PC-9 (cell line): ENCODE measurements at regions of chr3 and their contacts with region 1.

Region 1: DNA sequence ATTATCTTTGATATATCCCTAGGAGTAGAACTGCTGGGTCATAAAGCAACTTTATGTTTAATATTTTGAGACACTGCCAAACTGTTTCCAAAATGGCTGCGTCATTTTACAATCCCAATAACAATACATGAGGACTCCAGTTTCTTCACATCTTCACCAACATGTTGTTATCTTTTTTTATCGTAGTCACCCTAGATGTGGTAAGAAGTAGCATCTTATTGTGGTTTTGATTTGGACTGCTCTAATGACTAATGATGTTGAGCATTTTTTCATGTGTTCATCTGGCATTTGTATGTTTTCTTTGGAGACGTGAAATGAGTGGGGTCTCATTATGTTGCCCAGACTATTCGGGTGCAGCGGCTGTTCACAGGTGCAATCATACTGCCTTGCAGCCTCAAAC is 83.8 kb downstream of the MAP4 start:
- DNase-seq: no peak
- H3K4me3 ChIP-seq: no peak overlapping the region
- H3K27ac ChIP-seq: no peak overlapping the region
- H3K4me1 ChIP-seq: no peaks in the 10 kb centered on the region
- H3K27me3 ChIP-seq: no peaks in the 10 kb centered on the region
- CTCF ChIP-seq: no peak

Region 2: GRCh38 chr3:47664519-47664918 is 267.9 kb before region 1 on chr3:
- CTCF ChIA-PET with region 1: no interaction called
- POLR2A ChIA-PET with region 1: no interaction called
- intact Hi-C with region 1: no loop called
- DNase-seq: no peak
- H3K4me3 ChIP-seq: no peak overlapping the region
- H3K27ac ChIP-seq: no peak overlapping the region
- H3K4me1 ChIP-seq: peaks cover 9% of the 10 kb centered on the region
- H3K27me3 ChIP-seq: no peaks in the 10 kb centered on the region
- CTCF ChIP-seq: no peak

Region 3: DNA sequence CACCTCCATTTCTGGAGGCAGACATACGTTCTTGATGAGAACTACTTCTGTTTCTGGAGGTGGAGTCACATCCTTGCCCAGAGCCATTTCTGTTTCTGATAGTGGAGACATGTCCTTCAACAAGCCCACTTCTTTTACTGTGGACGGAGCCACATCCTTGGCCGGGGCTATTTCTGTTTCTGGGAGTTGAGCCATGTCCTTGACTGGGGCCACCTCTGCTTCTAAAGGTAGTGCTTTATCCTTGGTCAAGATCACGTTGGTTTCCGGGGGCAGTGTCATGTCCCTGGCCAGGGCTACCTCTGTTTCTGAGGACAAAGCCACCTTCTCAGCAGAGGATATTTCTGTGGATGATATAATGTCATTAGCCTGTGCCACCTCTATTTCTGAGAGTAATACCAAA is 16.2 kb before region 1 on chr3:
- CTCF ChIA-PET with region 1: interaction called, 20 read pairs
- POLR2A ChIA-PET with region 1: no interaction called
- intact Hi-C with region 1: no loop called
- DNase-seq: no peak
- H3K4me3 ChIP-seq: no peak overlapping the region
- H3K27ac ChIP-seq: no peak overlapping the region
- H3K4me1 ChIP-seq: peaks cover 10% of the 10 kb centered on the region
- H3K27me3 ChIP-seq: no peaks in the 10 kb centered on the region
- CTCF ChIP-seq: no peak

Region 4: DNA sequence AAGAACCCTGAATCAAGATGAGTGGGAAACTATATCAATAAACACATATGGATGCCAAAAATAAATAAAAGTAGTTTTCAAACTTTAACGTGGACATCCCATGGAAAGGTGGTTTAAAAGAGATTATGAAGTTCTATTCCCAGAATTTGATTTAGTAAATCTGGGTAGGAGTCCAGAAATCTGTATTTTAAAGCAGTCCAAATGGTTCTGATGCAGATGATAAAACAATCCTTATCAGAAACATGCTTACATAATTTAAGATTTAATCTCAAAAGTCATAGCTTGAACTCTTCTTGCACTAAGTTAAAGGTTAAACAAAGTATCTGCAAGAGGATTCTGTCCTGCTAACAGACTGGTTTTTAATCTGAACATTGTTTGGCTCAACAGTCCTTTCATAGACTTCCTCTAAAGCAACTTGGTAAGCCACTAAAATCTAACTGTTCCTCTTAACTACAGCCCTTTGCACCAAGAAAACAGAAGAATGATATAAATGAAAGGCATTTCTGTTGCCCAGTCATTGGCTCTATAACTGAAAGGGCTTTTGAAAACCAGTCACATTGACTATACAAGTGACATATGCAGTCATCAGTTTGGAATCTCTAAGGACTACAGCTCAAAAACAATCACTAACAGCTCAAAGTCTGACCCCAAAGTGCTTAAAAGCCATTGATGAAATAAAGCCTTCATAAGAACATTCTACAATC is 107.2 kb after region 1 on chr3:
- CTCF ChIA-PET with region 1: no interaction called
- POLR2A ChIA-PET with region 1: no interaction called
- intact Hi-C with region 1: no loop called
- DNase-seq: peak in 1 of 2 experiments; percentile 84
- H3K4me3 ChIP-seq: no peak overlapping the region
- H3K27ac ChIP-seq: peak overlapping the region; percentile 36; the same call in 1 of the 2 replicates
- H3K4me1 ChIP-seq: peaks cover 20% of the 10 kb centered on the region
- H3K27me3 ChIP-seq: no peaks in the 10 kb centered on the region
- CTCF ChIP-seq: no peak

Region 5: GRCh38 chr3:48318783-48319468 is 386.5 kb after region 1 on chr3:
- CTCF ChIA-PET with region 1: no interaction called
- POLR2A ChIA-PET with region 1: no interaction called
- intact Hi-C with region 1: no loop called
- DNase-seq: no peak
- H3K4me3 ChIP-seq: no peak overlapping the region
- H3K27ac ChIP-seq: no peak overlapping the region
- H3K4me1 ChIP-seq: no peaks in the 10 kb centered on the region
- H3K27me3 ChIP-seq: no peaks in the 10 kb centered on the region
- CTCF ChIP-seq: no peak